GM12878 (cell line): ENCODE measurements at regions of chr1 and their contacts with region 1.

Region 1: GRCh38 chr1:110338886-110339406 is at the start of gene RBM15:
- DNase-seq: peak; percentile 100
- ATAC-seq: peak; percentile 81
- H3K4me3 ChIP-seq: peak within 1 kb of the TSS; percentile 91
- H3K27ac ChIP-seq: peak within 1 kb of the TSS; percentile 97
- H3K4me1 ChIP-seq: peaks cover 5% of the 10 kb centered on the region
- H3K27me3 ChIP-seq: no peaks in the 10 kb centered on the region
- CTCF ChIP-seq: no peak
- EP300 ChIP-seq: peak in 1 of 2 experiments; percentile 45; a peak in 2 of 4 replicates
- POLR2A ChIP-seq: no peak
- RAD21 ChIP-seq: no peak
- polyA plus RNA-seq, gene RBM15: 3.1 to 3.6 TPM

Region 2: DNA sequence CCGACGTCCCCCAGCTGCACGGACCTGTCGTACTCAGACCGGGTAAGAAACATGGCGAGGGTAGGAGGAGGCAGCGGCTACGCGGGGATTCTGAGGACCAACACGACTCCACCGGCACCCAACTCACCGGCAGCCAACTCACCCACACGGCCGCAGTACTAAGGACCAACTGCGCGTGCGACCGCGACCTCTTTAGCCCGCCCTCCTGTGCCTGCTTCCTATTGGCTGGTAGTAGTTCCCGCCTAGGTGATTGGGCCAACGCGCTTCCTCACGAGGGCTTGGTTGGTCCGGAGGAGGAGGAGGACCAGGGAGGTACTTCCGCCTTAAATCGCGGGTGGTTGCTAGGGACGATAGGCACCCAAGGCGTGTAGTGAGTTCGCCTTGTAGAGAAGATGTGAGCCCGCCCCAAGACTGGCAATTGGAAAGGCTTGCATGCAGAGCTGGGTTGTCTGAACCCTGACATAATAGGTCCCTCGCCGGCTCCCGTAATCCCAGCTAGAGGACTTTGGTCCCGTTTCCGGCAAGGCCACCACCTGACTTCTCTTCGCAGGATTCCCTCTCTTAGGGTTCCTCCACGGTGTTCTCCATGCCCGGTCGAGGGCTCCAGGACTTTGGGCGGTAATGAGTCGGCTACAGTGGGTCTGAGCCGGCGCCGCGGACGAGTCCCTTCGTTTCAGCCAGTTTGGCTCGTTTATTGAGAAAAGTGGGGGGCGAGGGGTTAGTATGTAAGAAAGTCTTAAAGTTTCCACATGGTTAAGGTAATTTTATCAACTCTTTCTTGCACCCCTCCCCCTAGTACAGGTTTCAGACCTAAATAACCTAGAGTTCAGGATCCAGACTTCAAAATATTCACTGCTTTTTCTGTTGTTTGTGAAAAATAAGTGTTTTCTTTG is 912.4 kb before region 1 on chr1 and contains the start of gene PSMA5:
- CTCF ChIA-PET with region 1: no interaction called
- POLR2A ChIA-PET with region 1: no interaction called
- RAD21 ChIA-PET with region 1: no interaction called
- SMC1A ChIA-PET with region 1: no interaction called
- in situ Hi-C with region 1: no loop called
- intact Hi-C with region 1: loop called (anchors 10 kb)
- DNase-seq: peak; percentile 99
- ATAC-seq: peak; percentile 99
- H3K4me3 ChIP-seq: peak within 1 kb of the TSS; percentile 98
- H3K27ac ChIP-seq: peak within 1 kb of the TSS; percentile 89
- H3K4me1 ChIP-seq: no peaks in the 10 kb centered on the region; the same call in 1 of the 2 replicates
- H3K27me3 ChIP-seq: no peaks in the 10 kb centered on the region
- CTCF ChIP-seq: no peak
- EP300 ChIP-seq: peak in 1 of 2 experiments; percentile 47; a peak in 1 of 4 replicates
- POLR2A ChIP-seq: peak; percentile 100
- RAD21 ChIP-seq: no peak
- polyA plus RNA-seq, gene PSMA5: 267 to 271 TPM

Region 3: GRCh38 chr1:109975718-109976117 is 363.2 kb before region 1 on chr1:
- CTCF ChIA-PET with region 1: no interaction called
- POLR2A ChIA-PET with region 1: no interaction called
- RAD21 ChIA-PET with region 1: no interaction called
- SMC1A ChIA-PET with region 1: no interaction called
- in situ Hi-C with region 1: no loop called
- intact Hi-C with region 1: no loop called
- DNase-seq: no peak
- ATAC-seq: no peak
- H3K4me3 ChIP-seq: no peak overlapping the region
- H3K27ac ChIP-seq: no peak overlapping the region
- H3K4me1 ChIP-seq: no peaks in the 10 kb centered on the region
- H3K27me3 ChIP-seq: no peaks in the 10 kb centered on the region; a peak in 2 of 4 replicates
- CTCF ChIP-seq: no peak
- EP300 ChIP-seq: no peak
- POLR2A ChIP-seq: no peak
- RAD21 ChIP-seq: no peak

Region 4: DNA sequence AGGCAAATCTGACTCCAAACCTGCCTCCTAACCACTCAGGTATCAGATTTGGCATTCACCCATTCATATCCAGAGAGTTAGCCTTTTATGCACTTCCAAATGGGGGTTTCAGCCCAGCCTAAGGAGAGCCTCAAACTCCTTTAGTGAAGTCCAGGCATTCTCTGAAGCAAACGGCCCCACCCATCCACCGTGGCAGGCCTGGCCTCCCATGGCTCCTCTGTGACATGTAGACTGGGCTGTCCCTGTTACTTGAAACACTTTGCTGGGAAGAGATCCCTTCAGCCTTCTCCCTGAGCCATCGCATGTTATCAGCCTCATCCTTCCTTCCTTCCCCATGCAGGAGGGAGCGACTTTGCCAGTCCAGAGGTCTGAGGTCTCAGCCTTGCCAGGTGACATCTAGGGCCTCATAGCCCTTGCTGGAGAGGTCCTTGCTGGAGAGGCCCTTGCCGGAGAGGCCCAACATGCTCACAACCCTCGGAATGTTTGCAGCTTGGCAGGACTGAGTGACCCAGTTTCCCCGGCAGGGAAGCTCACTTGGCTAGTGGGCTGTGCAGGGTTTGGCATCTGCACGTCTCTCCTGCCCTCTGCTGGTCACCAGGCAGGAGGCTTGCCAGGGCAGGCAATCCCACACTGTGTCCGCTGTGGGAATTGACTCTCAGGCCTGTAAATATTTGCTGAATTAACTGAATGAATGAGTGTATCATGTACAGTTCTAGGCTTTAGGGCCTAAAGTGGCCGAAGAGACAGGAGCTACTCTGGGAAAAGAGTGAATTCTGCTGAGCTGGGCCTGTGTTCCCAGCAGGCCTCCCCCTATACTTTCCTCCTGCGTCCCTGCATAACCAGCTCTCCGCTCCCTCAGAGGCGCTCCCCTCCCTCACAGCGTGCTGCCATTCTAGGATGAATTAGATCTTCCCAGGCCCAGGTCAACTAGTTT is 26.5 kb before region 1 on chr1:
- CTCF ChIA-PET with region 1: interaction called, 21 read pairs
- POLR2A ChIA-PET with region 1: interaction called, 3 read pairs
- RAD21 ChIA-PET with region 1: interaction called, 12 read pairs
- SMC1A ChIA-PET with region 1: interaction called, 10 read pairs
- in situ Hi-C with region 1: no loop called
- intact Hi-C with region 1: no loop called
- DNase-seq: peak; percentile 19
- ATAC-seq: peak; percentile 100
- H3K4me3 ChIP-seq: no peak overlapping the region
- H3K27ac ChIP-seq: no peak overlapping the region
- H3K4me1 ChIP-seq: no peaks in the 10 kb centered on the region
- H3K27me3 ChIP-seq: no peaks in the 10 kb centered on the region
- CTCF ChIP-seq: peak; percentile 93
- EP300 ChIP-seq: no peak
- POLR2A ChIP-seq: no peak
- RAD21 ChIP-seq: peak; percentile 97

Region 5: DNA sequence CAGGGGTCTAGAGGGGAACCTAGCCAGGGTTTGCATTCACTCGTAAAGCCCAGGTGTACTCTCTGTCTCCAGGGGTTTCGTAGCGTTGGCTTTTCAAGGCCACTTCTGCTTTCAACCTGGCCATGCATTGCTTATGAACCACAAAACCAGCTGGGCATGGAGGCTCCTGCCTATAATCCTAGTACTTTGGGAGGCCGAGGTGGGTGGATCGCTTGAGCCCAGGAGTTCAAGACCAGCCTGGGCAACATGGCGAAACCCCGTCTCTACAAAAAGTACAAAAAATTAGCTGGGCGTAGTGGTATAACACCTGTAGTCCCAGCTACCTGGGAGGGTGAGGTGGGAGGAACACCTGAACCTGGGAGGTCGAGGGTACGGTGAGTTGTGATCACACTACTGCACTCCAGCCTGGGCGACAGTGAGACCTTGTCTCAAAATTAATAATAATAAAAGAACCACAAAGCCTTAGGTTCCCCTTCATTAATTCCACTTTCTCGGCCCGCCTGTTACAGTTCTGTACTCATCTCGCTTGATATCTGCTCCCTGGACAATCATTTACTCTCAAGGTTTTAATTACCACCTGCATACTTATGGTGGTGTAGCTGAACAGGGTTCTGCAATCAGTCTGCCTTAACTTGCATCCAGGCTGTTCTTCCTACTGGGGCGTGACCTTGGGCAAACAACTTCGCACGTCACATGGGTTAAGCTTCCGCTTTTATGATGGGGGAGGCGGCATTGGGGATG is 45.8 kb after region 1 on chr1:
- CTCF ChIA-PET with region 1: interaction called, 21 read pairs
- POLR2A ChIA-PET with region 1: interaction called, 28 read pairs
- RAD21 ChIA-PET with region 1: interaction called, 27 read pairs
- SMC1A ChIA-PET with region 1: interaction called, 37 read pairs
- in situ Hi-C with region 1: no loop called
- intact Hi-C with region 1: loop called (anchors 2 kb)
- DNase-seq: peak; percentile 45
- ATAC-seq: peak; percentile 90
- H3K4me3 ChIP-seq: peak overlapping the region; percentile 53; the same call in 1 of the 2 replicates
- H3K27ac ChIP-seq: peak overlapping the region; percentile 69
- H3K4me1 ChIP-seq: peaks cover 25% of the 10 kb centered on the region
- H3K27me3 ChIP-seq: no peaks in the 10 kb centered on the region
- CTCF ChIP-seq: no peak
- EP300 ChIP-seq: peak in 1 of 2 experiments; percentile 15; a peak in 1 of 4 replicates
- POLR2A ChIP-seq: peak; percentile 43
- RAD21 ChIP-seq: no peak

Region 6: DNA sequence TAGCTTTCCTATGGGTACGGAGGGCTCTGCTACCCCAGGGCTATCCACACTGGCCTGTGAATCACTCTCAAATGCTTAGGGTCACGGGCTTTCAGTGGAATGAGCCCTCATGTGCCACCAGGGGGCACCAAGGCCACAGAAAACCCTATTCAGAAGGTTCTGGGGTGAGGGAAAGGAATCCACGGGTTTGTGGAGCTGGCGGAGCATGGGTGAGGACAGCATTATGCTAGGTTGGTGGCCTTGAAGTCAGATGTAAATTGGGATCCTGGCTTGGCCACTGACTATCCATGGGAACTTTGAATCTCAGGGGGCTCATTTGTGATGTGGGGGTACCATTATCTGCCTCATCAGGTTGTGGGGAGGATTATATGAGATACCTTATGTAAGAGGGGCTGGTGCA is 73.6 kb after region 1 on chr1:
- CTCF ChIA-PET with region 1: interaction called, 35 read pairs
- POLR2A ChIA-PET with region 1: interaction called, 43 read pairs
- RAD21 ChIA-PET with region 1: interaction called, 29 read pairs
- SMC1A ChIA-PET with region 1: interaction called, 27 read pairs
- in situ Hi-C with region 1: no loop called
- intact Hi-C with region 1: loop called (anchors 2 kb)
- DNase-seq: peak; percentile 24
- ATAC-seq: peak; percentile 88
- H3K4me3 ChIP-seq: no peak overlapping the region
- H3K27ac ChIP-seq: no peak overlapping the region
- H3K4me1 ChIP-seq: peaks cover 6% of the 10 kb centered on the region
- H3K27me3 ChIP-seq: peaks cover 0 to 2% of the 10 kb centered on the region in 2 experiments; a peak in 2 of 4 replicates
- CTCF ChIP-seq: peak; percentile 80 to 83 (median 83)
- EP300 ChIP-seq: no peak
- POLR2A ChIP-seq: no peak
- RAD21 ChIP-seq: peak; percentile 86

Region 7: DNA sequence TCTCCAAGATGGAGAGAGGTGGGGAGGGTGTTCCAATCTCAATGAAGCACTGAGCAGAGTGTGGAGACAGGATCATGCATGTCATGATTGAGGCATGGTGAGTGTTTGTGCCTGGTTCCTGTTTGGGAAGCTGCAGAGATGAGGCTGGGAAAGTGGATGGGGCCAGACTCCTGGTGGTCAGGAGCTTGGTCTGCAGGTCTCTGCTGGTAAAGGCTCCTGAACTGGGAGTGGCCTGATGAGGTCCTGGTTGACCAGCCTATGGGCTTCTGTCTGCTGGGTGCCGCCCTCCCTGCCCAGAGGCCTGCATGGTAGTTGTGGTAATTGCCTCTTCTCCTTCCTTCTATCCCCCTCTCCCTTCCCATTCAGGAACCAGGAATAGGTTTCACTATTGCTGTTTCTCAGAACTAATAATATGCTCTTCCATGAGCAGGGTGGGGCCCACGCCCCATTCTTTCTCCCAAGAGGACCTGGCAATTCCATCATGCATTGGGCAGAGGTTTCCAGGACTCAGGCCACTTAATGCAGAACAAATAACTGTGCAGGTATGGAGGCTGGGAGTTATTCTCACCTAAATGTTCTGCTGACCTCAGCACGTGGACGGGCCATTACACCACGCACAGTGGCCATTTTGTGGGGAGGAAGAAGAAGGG is 136.6 kb after region 1 on chr1:
- CTCF ChIA-PET with region 1: no interaction called
- POLR2A ChIA-PET with region 1: no interaction called
- RAD21 ChIA-PET with region 1: no interaction called
- SMC1A ChIA-PET with region 1: no interaction called
- in situ Hi-C with region 1: no loop called
- intact Hi-C with region 1: no loop called
- DNase-seq: no peak
- ATAC-seq: peak; percentile 53; the same call in 2 of the 3 replicates
- H3K4me3 ChIP-seq: no peak overlapping the region
- H3K27ac ChIP-seq: no peak overlapping the region
- H3K4me1 ChIP-seq: no peaks in the 10 kb centered on the region
- H3K27me3 ChIP-seq: no peaks in the 10 kb centered on the region
- CTCF ChIP-seq: no peak
- EP300 ChIP-seq: no peak
- POLR2A ChIP-seq: no peak
- RAD21 ChIP-seq: no peak

Region 8: GRCh38 chr1:111778541-111779051 is 1439.7 kb after region 1 on chr1:
- CTCF ChIA-PET with region 1: no interaction called
- POLR2A ChIA-PET with region 1: no interaction called
- RAD21 ChIA-PET with region 1: no interaction called
- SMC1A ChIA-PET with region 1: no interaction called
- in situ Hi-C with region 1: no loop called
- intact Hi-C with region 1: no loop called
- DNase-seq: no peak
- ATAC-seq: no peak
- H3K4me3 ChIP-seq: no peak overlapping the region
- H3K27ac ChIP-seq: no peak overlapping the region
- H3K4me1 ChIP-seq: no peaks in the 10 kb centered on the region
- H3K27me3 ChIP-seq: no peaks in the 10 kb centered on the region; a peak in 1 of 4 replicates
- CTCF ChIP-seq: no peak
- EP300 ChIP-seq: no peak
- POLR2A ChIP-seq: no peak
- RAD21 ChIP-seq: no peak